Activated CD8-positive, alpha-beta T cell treated with anti-CD3 and anti-CD28 coated beads for 36 hours (primary cell): ENCODE measurements at regions of chr1 and their contacts with region 1.

Region 1: GRCh38 chr1:77978969-77979876 is at the start of gene FUBP1:
- DNase-seq: peak; percentile 97
- ATAC-seq: peak; percentile 76
- H3K4me3 Mint-ChIP-seq: no peak within 1 kb of the TSS
- H3K27ac Mint-ChIP-seq: no peak within 1 kb of the TSS
- H3K4me1 Mint-ChIP-seq: peaks cover 38% of the 10 kb centered on the region
- H3K27me3 Mint-ChIP-seq: no peaks in the 10 kb centered on the region
- CTCF ChIP-seq: peak; percentile 74
- total RNA-seq, gene FUBP1: 256 to 257 TPM

Region 2: GRCh38 chr1:77683160-77684148 is 295.8 kb before region 1 on chr1:
- CTCF ChIA-PET with region 1: interaction called, 3 read pairs
- POLR2A ChIA-PET with region 1: interaction called, 28 read pairs
- intact Hi-C with region 1: no loop called
- DNase-seq: peak; percentile 94
- ATAC-seq: peak; percentile 79
- H3K4me3 Mint-ChIP-seq: peak overlapping the region; percentile 99
- H3K27ac Mint-ChIP-seq: peak overlapping the region; percentile 96
- H3K4me1 Mint-ChIP-seq: peaks cover 32% of the 10 kb centered on the region
- H3K27me3 Mint-ChIP-seq: no peaks in the 10 kb centered on the region
- CTCF ChIP-seq: peak; percentile 94

Region 3: GRCh38 chr1:77950873-77951272 is 28.4 kb before region 1 on chr1:
- CTCF ChIA-PET with region 1: no interaction called
- POLR2A ChIA-PET with region 1: interaction called, 36 read pairs
- intact Hi-C with region 1: no loop called
- DNase-seq: no peak
- ATAC-seq: peak; percentile 51
- H3K4me3 Mint-ChIP-seq: no peak overlapping the region
- H3K27ac Mint-ChIP-seq: peak overlapping the region; percentile 86
- H3K4me1 Mint-ChIP-seq: peaks cover 50% of the 10 kb centered on the region
- H3K27me3 Mint-ChIP-seq: no peaks in the 10 kb centered on the region
- CTCF ChIP-seq: no peak

Region 4: DNA sequence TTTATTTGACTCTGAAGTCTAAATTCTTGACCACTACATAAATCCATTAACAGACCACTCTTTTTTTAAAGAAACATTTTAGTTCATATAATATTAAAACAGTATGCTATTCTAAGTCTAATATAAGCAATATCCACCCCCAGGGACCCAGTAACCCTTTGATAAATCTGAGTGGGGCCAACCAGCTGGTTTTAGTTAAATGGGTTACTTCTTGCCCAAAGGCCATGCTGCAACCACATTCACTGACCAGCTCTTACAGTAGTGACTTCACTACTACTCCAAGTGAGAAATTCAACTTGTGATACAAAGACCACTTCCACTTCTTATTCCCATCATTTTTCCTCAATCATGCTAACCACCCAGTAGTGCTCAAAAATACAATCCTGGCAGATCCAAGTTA is 20.8 kb before region 1 on chr1:
- CTCF ChIA-PET with region 1: interaction called, 4 read pairs
- POLR2A ChIA-PET with region 1: interaction called, 76 read pairs
- intact Hi-C with region 1: no loop called
- DNase-seq: no peak
- ATAC-seq: no peak
- H3K4me3 Mint-ChIP-seq: no peak overlapping the region
- H3K27ac Mint-ChIP-seq: peak overlapping the region; percentile 28
- H3K4me1 Mint-ChIP-seq: peaks cover 37% of the 10 kb centered on the region
- H3K27me3 Mint-ChIP-seq: no peaks in the 10 kb centered on the region
- CTCF ChIP-seq: no peak